PC-9 (cell line): ENCODE measurements at regions of chr6 and their contacts with region 1.

Region 1: GRCh38 chr6:107877968-107878367 is 53.9 kb upstream of the SCML4 start:
- DNase-seq: no peak
- H3K4me3 ChIP-seq: no peak overlapping the region
- H3K27ac ChIP-seq: no peak overlapping the region
- H3K4me1 ChIP-seq: no peaks in the 10 kb centered on the region
- H3K27me3 ChIP-seq: no peaks in the 10 kb centered on the region
- CTCF ChIP-seq: no peak

Region 2: GRCh38 chr6:107847844-107848802 is 29.8 kb before region 1 on chr6:
- CTCF ChIA-PET with region 1: no interaction called
- POLR2A ChIA-PET with region 1: no interaction called
- intact Hi-C with region 1: no loop called
- DNase-seq: peak; percentile 52 to 83
- H3K4me3 ChIP-seq: peak overlapping the region; percentile 51
- H3K27ac ChIP-seq: no peak overlapping the region
- H3K4me1 ChIP-seq: no peaks in the 10 kb centered on the region
- H3K27me3 ChIP-seq: no peaks in the 10 kb centered on the region
- CTCF ChIP-seq: peak; percentile 97

Region 3: DNA sequence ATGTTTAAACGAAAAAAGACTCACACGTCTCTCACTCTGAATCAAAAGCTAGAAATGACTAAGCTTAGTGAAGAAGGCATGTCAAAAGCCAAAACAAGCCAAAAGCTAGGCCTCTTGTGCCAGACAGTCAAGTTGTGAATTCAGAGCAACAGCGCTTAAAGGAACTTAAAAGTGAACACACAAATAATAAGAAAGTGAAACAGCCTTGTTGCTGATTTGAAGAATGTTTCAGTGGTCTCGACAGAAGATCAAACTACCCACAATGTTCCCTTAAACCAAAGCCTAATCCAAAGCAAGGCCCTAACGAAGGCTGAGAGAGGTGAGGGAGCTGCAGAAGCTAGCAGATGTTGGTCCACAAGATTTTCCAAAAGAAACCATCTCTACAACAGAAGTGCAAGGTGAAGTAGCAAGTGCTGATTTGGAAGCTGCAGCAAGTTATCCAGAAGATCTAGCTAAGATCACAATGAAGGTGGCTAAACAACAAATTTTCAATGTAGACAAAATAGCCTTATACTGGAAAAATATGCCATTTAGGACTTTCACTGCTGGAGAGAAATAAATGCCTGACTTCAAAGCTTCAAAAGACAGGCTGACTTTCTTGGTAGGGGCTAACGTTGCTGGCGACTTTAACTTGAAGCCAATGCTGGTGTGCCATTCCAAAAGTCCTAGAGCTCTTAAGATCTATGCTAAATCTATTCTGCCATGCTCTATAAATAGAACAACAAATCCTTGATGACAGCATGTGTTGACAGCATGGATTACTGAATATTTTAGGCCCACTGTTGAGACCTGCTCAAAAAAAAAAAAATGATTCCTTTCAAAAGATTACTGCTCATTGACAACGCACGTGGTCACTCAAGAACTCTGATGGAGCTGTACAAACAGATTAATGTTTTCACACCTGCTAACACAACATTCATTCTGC is 39.7 kb after region 1 on chr6:
- CTCF ChIA-PET with region 1: interaction called, 21 read pairs
- POLR2A ChIA-PET with region 1: no interaction called
- intact Hi-C with region 1: no loop called
- DNase-seq: no peak
- H3K4me3 ChIP-seq: no peak overlapping the region
- H3K27ac ChIP-seq: no peak overlapping the region
- H3K4me1 ChIP-seq: no peaks in the 10 kb centered on the region
- H3K27me3 ChIP-seq: no peaks in the 10 kb centered on the region
- CTCF ChIP-seq: no peak

Region 4: DNA sequence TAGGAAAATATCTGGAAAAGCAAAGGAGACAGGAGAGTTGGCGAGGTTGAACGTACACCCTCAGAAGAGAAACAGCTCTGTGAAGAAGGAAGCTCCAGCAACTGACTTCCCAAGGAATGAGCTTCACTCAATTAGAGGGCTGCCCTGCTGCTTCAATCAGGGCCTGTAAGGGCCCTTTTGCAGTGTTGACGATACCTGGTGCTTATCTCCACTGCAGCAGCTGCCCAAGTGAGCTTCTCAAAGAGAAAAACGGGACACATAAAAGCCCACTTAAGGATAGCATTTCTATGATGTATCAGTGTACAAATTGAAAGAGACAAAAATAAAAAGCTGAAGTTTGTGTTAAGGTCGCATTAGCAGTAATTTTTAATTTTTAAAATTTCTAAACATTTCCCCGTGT is 63.7 kb after region 1 on chr6:
- CTCF ChIA-PET with region 1: no interaction called
- POLR2A ChIA-PET with region 1: no interaction called
- intact Hi-C with region 1: no loop called
- DNase-seq: no peak
- H3K4me3 ChIP-seq: no peak overlapping the region
- H3K27ac ChIP-seq: no peak overlapping the region
- H3K4me1 ChIP-seq: no peaks in the 10 kb centered on the region
- H3K27me3 ChIP-seq: no peaks in the 10 kb centered on the region
- CTCF ChIP-seq: no peak